ENCODE measurements at regions of chr3 and their contacts with region 1.

Region 1: GRCh38 chr3:136250226-136250902 is at the start of gene PCCB:
- DNase-seq: peak; percentile 65 to 96
- H3K4me3 ChIP-seq: peak within 1 kb of the TSS; percentile 60 to 81
- H3K27ac ChIP-seq: peak within 1 kb of the TSS; percentile 80 to 90
- H3K4me1 ChIP-seq: peaks cover 0 to 3% of the 10 kb centered on the region in 2 donors
- H3K27me3 ChIP-seq: no peaks in the 10 kb centered on the region
- CTCF ChIP-seq: peak; percentile 81 to 92 (median 85)
- total RNA-seq, gene PCCB: 114 TPM

Region 2: DNA sequence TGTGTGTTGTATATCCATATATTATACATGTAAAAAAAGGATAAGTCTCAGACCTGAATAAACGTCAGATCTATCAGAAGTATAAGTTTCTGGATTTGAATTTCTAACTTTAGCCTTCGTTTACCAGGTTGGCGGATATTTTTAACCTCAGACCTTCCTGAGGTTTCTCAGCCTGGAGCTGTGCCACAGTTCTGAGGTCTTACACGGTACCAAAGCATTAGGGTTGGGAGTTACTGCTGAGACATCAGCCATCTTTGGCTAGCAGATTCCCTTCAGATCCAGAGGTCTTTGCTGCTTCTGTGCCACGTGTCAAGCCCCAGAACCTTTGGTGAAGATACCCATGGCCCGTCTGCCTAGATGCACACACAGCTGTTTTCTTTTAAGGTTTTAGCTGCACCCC is 200.1 kb before region 1 on chr3:
- intact Hi-C with region 1: no loop called
- DNase-seq: no peak
- H3K4me3 ChIP-seq: no peak overlapping the region
- H3K27ac ChIP-seq: no peak overlapping the region
- H3K4me1 ChIP-seq: no peaks in the 10 kb centered on the region
- H3K27me3 ChIP-seq: no peaks in the 10 kb centered on the region
- CTCF ChIP-seq: no peak

Region 3: DNA sequence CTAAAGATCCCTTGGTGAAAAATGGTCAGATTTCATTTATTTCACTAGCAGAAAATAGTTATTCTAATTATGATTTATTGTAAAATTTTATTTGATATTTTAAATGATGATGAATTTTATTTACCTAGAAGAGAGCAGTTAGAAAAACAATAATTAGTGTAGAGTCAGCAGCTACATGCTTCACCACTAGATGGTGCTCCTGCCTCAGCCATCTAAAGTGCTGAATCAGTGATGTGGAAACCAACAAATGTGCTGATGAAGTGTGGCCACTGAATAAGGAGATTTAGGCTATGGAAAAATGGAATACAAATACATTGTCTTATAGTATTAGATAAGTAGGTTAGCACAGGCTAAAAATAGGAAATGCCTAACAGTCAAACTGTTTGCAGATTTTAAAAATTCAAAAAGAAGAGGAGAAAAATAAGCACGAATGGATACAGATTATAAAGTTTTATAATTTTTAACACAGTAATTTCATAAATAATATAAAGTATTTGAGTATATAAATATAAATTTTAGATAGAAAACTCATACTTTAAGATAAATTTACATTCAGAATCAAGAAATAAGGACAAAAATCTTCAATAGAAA is 175.1 kb before region 1 on chr3:
- intact Hi-C with region 1: loop called (anchors 1 kb)
- DNase-seq: peak; percentile 10 to 87
- H3K4me3 ChIP-seq: no peak overlapping the region
- H3K27ac ChIP-seq: no peak overlapping the region
- H3K4me1 ChIP-seq: peaks cover 6 to 15% of the 10 kb centered on the region in 2 donors
- H3K27me3 ChIP-seq: no peaks in the 10 kb centered on the region
- CTCF ChIP-seq: peak; percentile 87 to 91 (median 90)

Region 4: DNA sequence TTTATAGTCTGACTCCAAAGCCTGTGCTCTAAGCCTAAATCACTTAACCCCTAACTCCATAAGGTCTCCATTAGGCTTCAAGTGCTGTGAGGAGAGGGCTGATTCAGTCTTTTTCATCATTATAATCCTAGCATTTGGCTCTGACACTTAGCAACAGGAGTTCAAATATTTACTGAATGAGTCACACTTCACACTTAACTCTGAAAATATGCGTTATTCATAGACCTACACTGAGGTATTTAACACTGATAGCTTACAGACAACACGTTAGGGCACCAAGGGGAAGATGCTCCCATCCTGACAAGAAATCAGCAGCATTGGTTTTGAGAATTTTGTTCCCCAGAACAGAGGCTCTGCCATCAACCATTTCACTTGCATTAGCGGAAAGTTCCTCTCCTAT is 107.8 kb before region 1 on chr3:
- intact Hi-C with region 1: loop called (anchors 5 kb)
- DNase-seq: no peak
- H3K4me3 ChIP-seq: no peak overlapping the region
- H3K27ac ChIP-seq: peak overlapping the region; percentile 57 to 59
- H3K4me1 ChIP-seq: peaks cover 0 to 8% of the 10 kb centered on the region in 2 donors
- H3K27me3 ChIP-seq: no peaks in the 10 kb centered on the region
- CTCF ChIP-seq: no peak

Region 5: GRCh38 chr3:136152963-136153362 is 97.4 kb before region 1 on chr3:
- intact Hi-C with region 1: no loop called
- DNase-seq: no peak
- H3K4me3 ChIP-seq: no peak overlapping the region
- H3K27ac ChIP-seq: no peak overlapping the region
- H3K4me1 ChIP-seq: peaks cover 0 to 2% of the 10 kb centered on the region in 2 donors
- H3K27me3 ChIP-seq: no peaks in the 10 kb centered on the region
- CTCF ChIP-seq: no peak

Measured in ascending aorta (tissue), 2 donors.